Activated CD4-positive, alpha-beta memory T cell treated with anti-CD3 and anti-CD28 coated beads, Interleukin-2, amount 10 ng/mL, durations not matched to agents 7 days and 5 days (primary cell): ENCODE measurements at regions of chr12 and their contacts with region 1.

Region 1: DNA sequence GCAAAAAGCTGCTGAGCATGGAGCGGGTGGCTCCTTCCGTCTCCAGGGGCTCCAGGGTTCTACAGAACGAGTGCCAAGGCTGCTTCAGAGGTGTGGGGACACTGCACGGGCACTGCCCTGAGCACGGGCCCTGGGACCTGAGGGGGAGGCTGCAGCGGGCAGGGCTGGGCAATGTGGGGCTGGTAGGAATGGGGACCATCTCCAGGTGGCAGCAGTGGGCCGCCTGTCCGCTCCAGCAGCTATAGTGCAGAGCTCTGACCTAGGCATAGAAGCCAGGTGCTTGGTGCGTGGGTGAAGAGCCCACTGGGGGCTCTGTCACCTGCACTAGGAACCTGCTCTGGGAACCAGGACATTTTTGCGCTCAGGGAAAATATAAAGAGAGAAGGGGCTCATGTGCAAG is 22.3 kb downstream of the HDAC7 start:
- DNase-seq: peak; percentile 46
- H3K4me3 Mint-ChIP-seq: no peak overlapping the region
- H3K27ac Mint-ChIP-seq: peak overlapping the region; percentile 49
- H3K4me1 Mint-ChIP-seq: peaks cover 31% of the 10 kb centered on the region
- H3K27me3 Mint-ChIP-seq: no peaks in the 10 kb centered on the region

Region 2: GRCh38 chr12:47819896-47820630 is 22.6 kb after region 1 on chr12 and contains the start of gene HDAC7:
- CTCF ChIA-PET with region 1: interaction called, 578 read pairs
- POLR2A ChIA-PET with region 1: interaction called, 1,018 read pairs
- DNase-seq: peak; percentile 81
- H3K4me3 Mint-ChIP-seq: peak within 1 kb of the TSS; percentile 89
- H3K27ac Mint-ChIP-seq: peak within 1 kb of the TSS; percentile 93
- H3K4me1 Mint-ChIP-seq: peaks cover 66% of the 10 kb centered on the region
- H3K27me3 Mint-ChIP-seq: no peaks in the 10 kb centered on the region
- total RNA-seq, gene HDAC7: 315 to 328 TPM